Activated B cell treated with CpG ODN at 0.5 μM for 24 hours (primary cell): ENCODE measurements at regions of chr4 and their contacts with region 1.

Region 1: GRCh38 chr4:25903900-25904747 is 9.9 kb upstream of the SMIM20 start:
- DNase-seq: no peak
- ATAC-seq: peak; percentile 68
- H3K4me3 Mint-ChIP-seq: peak overlapping the region; percentile 63
- H3K27ac Mint-ChIP-seq: peak overlapping the region; percentile 75
- H3K4me1 Mint-ChIP-seq: peaks cover 56% of the 10 kb centered on the region
- H3K27me3 Mint-ChIP-seq: no peaks in the 10 kb centered on the region
- CTCF ChIP-seq: no peak

Region 2: DNA sequence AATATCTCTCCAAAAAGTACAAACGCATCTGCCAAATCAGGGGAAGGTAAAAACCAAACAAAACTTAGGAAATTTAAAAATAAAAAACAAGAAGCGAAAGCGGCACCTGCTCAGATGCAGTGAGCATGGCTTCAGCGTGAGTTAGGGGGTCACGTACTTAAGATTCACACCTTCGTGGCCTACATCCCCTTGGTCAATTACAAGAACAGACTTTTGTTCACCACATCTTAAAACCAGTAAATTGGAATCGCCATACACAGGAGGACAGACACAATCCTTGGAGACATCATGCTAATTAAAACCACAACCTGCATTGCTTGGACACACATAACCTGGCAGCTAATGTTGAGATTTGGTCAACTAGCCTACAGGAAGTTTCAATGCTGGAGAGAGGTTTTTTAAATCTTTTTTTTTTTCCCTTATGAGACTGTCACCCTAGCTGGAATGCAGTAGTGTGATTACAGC is 28.8 kb before region 1 on chr4:
- CTCF ChIA-PET with region 1: no interaction called
- POLR2A ChIA-PET with region 1: interaction called, 3 read pairs
- intact Hi-C with region 1: loop called (anchors 1 kb)
- DNase-seq: no peak
- ATAC-seq: peak; percentile 38
- H3K4me3 Mint-ChIP-seq: peak overlapping the region; percentile 29
- H3K27ac Mint-ChIP-seq: peak overlapping the region; percentile 84
- H3K4me1 Mint-ChIP-seq: peaks cover 94% of the 10 kb centered on the region
- H3K27me3 Mint-ChIP-seq: no peaks in the 10 kb centered on the region
- CTCF ChIP-seq: no peak

Region 3: GRCh38 chr4:25884031-25884782 is 19.9 kb before region 1 on chr4:
- CTCF ChIA-PET with region 1: no interaction called
- POLR2A ChIA-PET with region 1: interaction called, 3 read pairs
- intact Hi-C with region 1: loop called (anchors 1 kb)
- DNase-seq: no peak
- ATAC-seq: peak; percentile 57
- H3K4me3 Mint-ChIP-seq: no peak overlapping the region
- H3K27ac Mint-ChIP-seq: peak overlapping the region; percentile 62
- H3K4me1 Mint-ChIP-seq: peaks cover 50% of the 10 kb centered on the region
- H3K27me3 Mint-ChIP-seq: no peaks in the 10 kb centered on the region
- CTCF ChIP-seq: no peak

Region 4: DNA sequence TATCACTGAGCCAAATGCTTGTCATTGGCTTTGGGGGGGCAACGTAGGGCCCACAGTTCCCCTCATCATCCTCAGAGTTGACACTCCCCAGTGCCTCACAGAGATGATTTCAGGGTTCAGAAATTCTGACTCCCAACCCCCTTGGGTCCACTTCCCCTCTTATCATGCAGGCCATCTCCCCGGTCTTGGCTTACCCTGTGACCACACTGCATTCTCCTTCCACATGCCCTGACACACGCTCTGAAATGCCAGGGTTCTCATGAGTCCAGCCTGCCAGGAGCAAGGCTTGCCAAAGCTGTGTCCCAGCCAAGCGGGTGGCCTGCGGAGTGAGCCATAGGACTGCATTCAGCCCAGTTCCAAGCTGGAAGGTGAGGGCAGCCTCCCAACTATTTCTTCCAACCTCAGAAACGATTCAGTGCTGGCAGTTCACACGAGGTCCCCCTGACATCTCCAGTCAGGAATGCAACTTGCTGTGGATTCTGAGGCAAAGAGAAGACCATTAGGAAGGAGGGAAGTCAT is 111.1 kb after region 1 on chr4:
- CTCF ChIA-PET with region 1: no interaction called
- POLR2A ChIA-PET with region 1: no interaction called
- intact Hi-C with region 1: no loop called
- DNase-seq: no peak
- ATAC-seq: no peak
- H3K4me3 Mint-ChIP-seq: no peak overlapping the region
- H3K27ac Mint-ChIP-seq: no peak overlapping the region
- H3K4me1 Mint-ChIP-seq: no peaks in the 10 kb centered on the region
- H3K27me3 Mint-ChIP-seq: peaks cover 14% of the 10 kb centered on the region
- CTCF ChIP-seq: no peak